Stomach (tissue), 19 donors: ENCODE measurements at regions of chr1 and their contacts with region 1.

Region 1: GRCh38 chr1:161486806-161487741 is 18.2 kb upstream of the FCGR2A start:
- DNase-seq: peak in 1 of 2 donors; percentile 77
- H3K4me3 ChIP-seq: peak overlapping the region in 1 of 4 donors; percentile 7
- H3K27ac ChIP-seq: no peak overlapping the region
- H3K4me1 ChIP-seq: peaks cover 0 to 12% (median 5%) of the 10 kb centered on the region in 4 donors
- H3K27me3 ChIP-seq: peaks cover 0 to 57% (median under 1%) of the 10 kb centered on the region in 3 donors
- CTCF ChIP-seq: peak in 5 of 7 experiments; percentile 57 to 88 (median 67)
- EP300 ChIP-seq: no peak
- POLR2A ChIP-seq: no peak

Region 2: DNA sequence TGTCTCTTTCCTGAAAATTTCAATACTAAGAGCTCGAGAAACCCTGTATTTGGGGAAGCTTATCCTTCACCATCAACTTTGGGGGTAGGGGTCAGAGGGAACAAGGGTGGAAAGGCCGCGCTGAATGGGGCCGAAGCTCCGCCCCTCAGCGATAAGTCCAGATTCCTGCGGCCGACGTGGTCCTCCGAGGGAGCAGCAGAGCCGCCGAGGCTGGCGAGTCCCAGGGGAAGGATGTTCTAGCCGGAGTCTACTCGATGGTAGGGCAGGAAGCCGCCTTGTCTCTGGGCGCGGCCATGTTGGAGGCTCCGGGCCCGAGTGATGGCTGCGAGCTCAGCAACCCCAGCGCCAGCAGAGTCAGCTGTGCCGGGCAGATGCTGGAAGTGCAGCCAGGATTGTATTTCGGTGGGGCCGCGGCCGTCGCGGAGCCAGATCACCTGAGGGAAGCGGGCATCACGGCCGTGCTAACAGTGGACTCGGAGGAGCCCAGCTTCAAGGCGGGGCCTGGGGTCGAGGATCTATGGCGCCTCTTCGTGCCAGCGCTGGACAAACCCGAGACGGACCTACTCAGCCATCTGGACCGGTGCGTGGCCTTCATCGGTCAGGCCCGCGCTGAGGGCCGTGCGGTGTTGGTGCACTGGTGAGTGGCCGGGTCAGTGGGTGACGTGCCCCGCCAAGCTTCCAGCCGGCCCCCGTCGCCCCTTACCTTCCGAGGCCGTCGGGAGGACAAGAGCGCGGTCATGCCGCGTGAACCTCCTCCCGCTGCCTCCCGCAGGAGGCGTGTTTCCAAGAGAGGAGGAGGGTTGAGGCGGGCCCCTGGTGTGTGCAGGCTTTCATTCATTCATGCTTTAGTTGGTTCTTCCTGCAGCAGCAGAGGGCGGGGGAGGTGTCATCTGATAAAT is 262.7 kb after region 1 on chr1 and contains the start of gene DUSP12:
- intact Hi-C with region 1: loop called (anchors 10 kb)
- DNase-seq: peak; percentile 92 to 98
- H3K4me3 ChIP-seq: peak within 1 kb of the TSS; percentile 74 to 94 (median 83)
- H3K27ac ChIP-seq: peak within 1 kb of the TSS; percentile 88 to 95 (median 89)
- H3K4me1 ChIP-seq: peaks cover 9 to 23% (median 17%) of the 10 kb centered on the region in 4 donors
- H3K27me3 ChIP-seq: no peaks in the 10 kb centered on the region
- CTCF ChIP-seq: peak in 1 of 7 experiments; percentile 10
- EP300 ChIP-seq: no peak
- POLR2A ChIP-seq: peak in 1 of 4 donors; percentile 21
- total RNA-seq, gene DUSP12: 1.8 to 39.1 (median 22.2) TPM